Activated CD4-positive, alpha-beta T cell treated with anti-CD3 and anti-CD28 coated beads, Interleukin-2, amount 10 ng/mL, durations not matched to agents 24 days and 14 days (primary cell): ENCODE measurements at regions of chr6 and their contacts with region 1.

Region 1: DNA sequence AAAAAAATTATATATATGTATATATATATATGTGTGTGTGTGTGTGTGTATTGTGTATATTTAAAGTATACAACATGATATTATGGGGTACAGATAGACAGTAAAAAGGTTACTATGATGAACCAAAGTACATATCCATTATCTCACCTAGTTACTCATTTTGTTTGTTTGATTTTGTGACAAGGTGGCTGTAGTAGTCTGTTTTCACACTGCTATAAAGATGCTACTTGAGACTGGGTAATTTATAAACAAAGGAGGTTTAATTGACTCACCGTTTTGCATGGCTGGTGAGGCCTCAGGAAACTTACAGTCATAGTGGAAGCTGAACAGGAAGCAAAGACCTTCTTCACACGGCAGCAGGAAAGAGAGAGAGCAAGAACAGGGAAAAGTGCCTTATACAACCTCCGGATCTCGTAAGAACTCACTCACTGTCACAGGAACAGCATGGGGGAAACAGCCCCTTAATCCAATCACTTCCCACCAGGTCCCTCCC is 30.2 kb upstream of the DACT2 start:
- DNase-seq: no peak
- H3K4me3 Mint-ChIP-seq: no peak overlapping the region
- H3K27ac Mint-ChIP-seq: no peak overlapping the region
- H3K4me1 Mint-ChIP-seq: no peaks in the 10 kb centered on the region
- H3K27me3 Mint-ChIP-seq: peaks cover 7% of the 10 kb centered on the region

Region 2: GRCh38 chr6:167881327-167881726 is 468.4 kb before region 1 on chr6:
- intact Hi-C with region 1: no loop called
- DNase-seq: no peak
- H3K4me3 Mint-ChIP-seq: no peak overlapping the region
- H3K27ac Mint-ChIP-seq: no peak overlapping the region
- H3K4me1 Mint-ChIP-seq: no peaks in the 10 kb centered on the region
- H3K27me3 Mint-ChIP-seq: peaks cover 3% of the 10 kb centered on the region

Region 3: GRCh38 chr6:168239044-168239773 is 110.6 kb before region 1 on chr6:
- intact Hi-C with region 1: loop called (anchors 2 kb)
- DNase-seq: no peak
- H3K4me3 Mint-ChIP-seq: no peak overlapping the region
- H3K27ac Mint-ChIP-seq: peak overlapping the region; percentile 62
- H3K4me1 Mint-ChIP-seq: peaks cover 8% of the 10 kb centered on the region
- H3K27me3 Mint-ChIP-seq: no peaks in the 10 kb centered on the region

Region 4: DNA sequence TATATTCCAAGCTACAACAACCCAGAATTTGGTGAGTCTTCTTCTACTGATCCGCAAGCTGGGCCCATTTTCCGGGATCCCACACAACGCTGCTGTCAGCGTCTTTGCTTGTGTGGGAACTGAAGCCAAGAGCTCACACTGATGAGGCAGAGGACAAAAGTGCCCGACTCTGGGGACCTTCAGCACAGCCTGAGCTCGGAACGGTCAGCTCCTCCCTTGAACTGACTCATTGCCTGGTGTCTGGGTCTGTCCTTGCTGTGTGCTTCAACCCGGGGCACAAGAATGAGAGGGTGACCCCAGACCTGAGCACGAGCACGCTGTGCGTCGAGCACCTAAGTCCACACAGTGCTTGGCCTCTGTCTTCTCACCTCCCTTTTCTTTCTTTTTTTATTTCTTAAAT is 63.6 kb before region 1 on chr6:
- intact Hi-C with region 1: loop called (anchors 2 kb)
- DNase-seq: no peak
- H3K4me3 Mint-ChIP-seq: no peak overlapping the region
- H3K27ac Mint-ChIP-seq: no peak overlapping the region
- H3K4me1 Mint-ChIP-seq: peaks cover 12% of the 10 kb centered on the region
- H3K27me3 Mint-ChIP-seq: no peaks in the 10 kb centered on the region

Region 5: DNA sequence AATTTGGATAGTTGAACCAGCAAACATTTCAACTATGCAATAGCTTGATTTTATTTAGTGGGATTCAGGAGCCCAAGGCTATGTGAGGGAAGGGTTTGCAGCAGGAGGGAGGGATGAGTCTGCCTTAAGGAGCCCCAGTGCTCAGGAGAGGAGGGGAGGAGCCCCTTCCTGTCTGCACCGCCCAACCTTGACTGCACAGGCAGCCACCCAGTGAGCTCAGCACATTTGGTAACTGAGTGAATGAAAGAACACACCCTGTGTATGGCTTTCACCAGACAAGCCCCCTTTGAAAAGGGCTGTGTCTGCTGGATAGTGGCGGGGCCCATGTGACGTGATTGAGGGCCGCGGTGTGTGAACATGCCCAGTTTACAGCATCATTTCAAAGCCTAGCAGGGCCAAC is 47.2 kb before region 1 on chr6:
- intact Hi-C with region 1: no loop called
- DNase-seq: no peak
- H3K4me3 Mint-ChIP-seq: no peak overlapping the region
- H3K27ac Mint-ChIP-seq: no peak overlapping the region
- H3K4me1 Mint-ChIP-seq: no peaks in the 10 kb centered on the region
- H3K27me3 Mint-ChIP-seq: peaks cover 2% of the 10 kb centered on the region

Region 6: GRCh38 chr6:168333039-168333438 is 16.7 kb before region 1 on chr6:
- intact Hi-C with region 1: no loop called
- DNase-seq: no peak
- H3K4me3 Mint-ChIP-seq: no peak overlapping the region
- H3K27ac Mint-ChIP-seq: no peak overlapping the region
- H3K4me1 Mint-ChIP-seq: no peaks in the 10 kb centered on the region
- H3K27me3 Mint-ChIP-seq: peaks cover 3% of the 10 kb centered on the region

Region 7: GRCh38 chr6:169289619-169290339 is 940.0 kb after region 1 on chr6:
- intact Hi-C with region 1: no loop called
- DNase-seq: peak; percentile 31
- H3K4me3 Mint-ChIP-seq: no peak overlapping the region
- H3K27ac Mint-ChIP-seq: no peak overlapping the region
- H3K4me1 Mint-ChIP-seq: no peaks in the 10 kb centered on the region
- H3K27me3 Mint-ChIP-seq: no peaks in the 10 kb centered on the region